B cell (primary cell): ENCODE measurements at regions of chr22 and their contacts with region 1.

Region 1: GRCh38 chr22:20016734-20017621 is at the start of gene ARVCF:
- DNase-seq: peak; percentile 97
- ATAC-seq: peak; percentile 69
- H3K4me3 ChIP-seq: peak within 1 kb of the TSS; percentile 22 to 79 (median 76)
- H3K4me3 Mint-ChIP-seq: peak within 1 kb of the TSS; percentile 91
- H3K27ac ChIP-seq: no peak within 1 kb of the TSS
- H3K27ac Mint-ChIP-seq: peak within 1 kb of the TSS; percentile 61
- H3K4me1 ChIP-seq: peaks cover 18 to 22% of the 10 kb centered on the region in 2 donors
- H3K4me1 Mint-ChIP-seq: peaks cover 25% of the 10 kb centered on the region
- H3K27me3 ChIP-seq: peaks cover 0 to 25% (median 4%) of the 10 kb centered on the region in 4 experiments
- H3K27me3 Mint-ChIP-seq: no peaks in the 10 kb centered on the region
- CTCF ChIP-seq: peak; percentile 39
- total RNA-seq, gene ARVCF: 6.7 and 8.4 TPM in 2 replicates

Region 2: GRCh38 chr22:19806213-19807145 is 210.5 kb before region 1 on chr22:
- CTCF ChIA-PET with region 1: no interaction called
- POLR2A ChIA-PET with region 1: no interaction called
- intact Hi-C with region 1: no loop called
- DNase-seq: no peak
- ATAC-seq: no peak
- H3K4me3 ChIP-seq: no peak overlapping the region
- H3K4me3 Mint-ChIP-seq: no peak overlapping the region
- H3K27ac ChIP-seq: no peak overlapping the region
- H3K27ac Mint-ChIP-seq: no peak overlapping the region
- H3K4me1 ChIP-seq: no peaks in the 10 kb centered on the region
- H3K4me1 Mint-ChIP-seq: no peaks in the 10 kb centered on the region
- H3K27me3 ChIP-seq: no peaks in the 10 kb centered on the region
- H3K27me3 Mint-ChIP-seq: no peaks in the 10 kb centered on the region
- CTCF ChIP-seq: no peak

Region 3: GRCh38 chr22:19854778-19855503 is 162.0 kb before region 1 on chr22 and contains the starts of genes GNB1L and RTL10:
- CTCF ChIA-PET with region 1: no interaction called
- POLR2A ChIA-PET with region 1: no interaction called
- intact Hi-C with region 1: loop called (anchors 2 kb)
- DNase-seq: peak; percentile 97
- ATAC-seq: peak; percentile 93
- H3K4me3 ChIP-seq: peak within 1 kb of the TSS; percentile 70 to 97 (median 88)
- H3K4me3 Mint-ChIP-seq: peak within 1 kb of the TSS; percentile 95
- H3K27ac ChIP-seq: peak within 1 kb of the TSS; percentile 85 to 88
- H3K27ac Mint-ChIP-seq: peak within 1 kb of the TSS; percentile 97
- H3K4me1 ChIP-seq: peaks cover 21 to 26% of the 10 kb centered on the region in 2 donors
- H3K4me1 Mint-ChIP-seq: peaks cover 43% of the 10 kb centered on the region
- H3K27me3 ChIP-seq: no peaks in the 10 kb centered on the region
- H3K27me3 Mint-ChIP-seq: no peaks in the 10 kb centered on the region
- CTCF ChIP-seq: no peak
- total RNA-seq, gene GNB1L: 6.6 and 7.2 TPM in 2 replicates
- total RNA-seq, gene RTL10: 14.8 and 15.2 TPM in 2 replicates

Region 4: DNA sequence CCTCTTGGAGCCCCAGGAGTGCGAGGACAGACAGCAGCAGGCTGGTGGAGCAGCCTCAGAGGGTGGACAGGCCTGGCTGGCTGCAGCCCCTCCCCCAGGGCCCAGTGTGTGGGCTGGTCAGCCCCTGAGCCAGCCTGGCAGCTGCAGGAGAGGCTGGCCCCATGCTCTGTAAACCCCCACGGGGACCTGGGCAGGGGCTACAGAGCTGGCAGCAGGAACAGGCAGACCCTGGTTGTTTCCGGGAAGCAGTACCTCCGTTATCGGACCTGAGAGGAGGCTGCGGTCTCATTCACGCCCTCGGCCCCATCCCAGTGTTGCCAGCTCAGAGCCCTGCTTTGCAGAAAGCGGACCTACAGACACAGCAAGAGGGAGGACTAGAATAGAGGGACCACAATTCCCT is 113.9 kb before region 1 on chr22:
- CTCF ChIA-PET with region 1: no interaction called
- POLR2A ChIA-PET with region 1: no interaction called
- intact Hi-C with region 1: no loop called
- DNase-seq: no peak
- ATAC-seq: no peak
- H3K4me3 ChIP-seq: no peak overlapping the region
- H3K4me3 Mint-ChIP-seq: no peak overlapping the region
- H3K27ac ChIP-seq: no peak overlapping the region
- H3K27ac Mint-ChIP-seq: no peak overlapping the region
- H3K4me1 ChIP-seq: no peaks in the 10 kb centered on the region
- H3K4me1 Mint-ChIP-seq: no peaks in the 10 kb centered on the region
- H3K27me3 ChIP-seq: no peaks in the 10 kb centered on the region
- H3K27me3 Mint-ChIP-seq: no peaks in the 10 kb centered on the region
- CTCF ChIP-seq: no peak

Region 5: DNA sequence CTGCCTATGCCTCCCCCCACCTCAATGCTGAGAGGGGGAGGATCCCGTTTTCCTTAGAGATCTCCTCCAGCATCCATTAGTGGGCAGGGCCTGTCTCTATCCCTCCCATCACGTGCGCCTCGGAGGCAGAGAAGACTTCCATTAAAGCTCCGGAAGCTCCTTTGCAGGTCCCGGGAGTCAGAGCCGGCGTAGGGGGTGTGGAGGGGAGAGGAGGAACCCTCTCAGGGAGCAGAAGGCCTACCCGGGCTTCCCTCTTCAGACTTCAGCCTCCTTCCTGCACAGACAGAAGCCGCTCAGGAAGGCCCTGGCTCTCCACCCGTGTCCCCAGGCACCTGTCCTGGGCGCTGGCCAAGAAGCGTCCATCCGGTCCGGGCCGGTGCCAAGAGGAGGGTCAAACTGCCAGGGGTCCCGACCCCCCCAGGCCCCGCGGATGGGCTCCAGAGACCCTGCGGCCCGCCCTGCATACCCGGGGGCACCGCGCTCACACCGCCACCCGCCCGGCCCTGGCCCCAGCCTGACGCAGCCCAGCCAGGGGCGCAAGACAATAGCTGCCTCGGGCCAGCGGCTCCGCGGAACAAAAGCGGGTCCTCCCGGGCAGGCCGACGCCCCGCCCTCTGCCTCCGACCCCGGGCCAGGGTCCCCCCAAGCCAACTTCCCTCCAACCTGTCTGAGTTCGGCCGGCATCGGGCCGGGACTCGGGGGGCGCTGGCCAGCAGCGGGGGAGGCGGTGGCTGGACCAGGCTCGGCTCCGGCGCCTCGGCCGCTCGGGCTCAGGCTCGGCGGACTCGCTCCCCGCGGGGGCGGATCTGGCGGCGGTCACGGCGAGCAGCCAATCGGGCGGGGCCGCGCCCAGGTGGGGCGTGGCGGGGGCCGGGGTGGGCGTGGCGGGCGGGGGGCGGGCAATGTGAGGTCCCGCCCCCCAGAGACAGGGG is 30.3 kb before region 1 on chr22:
- CTCF ChIA-PET with region 1: interaction called, 7 read pairs
- POLR2A ChIA-PET with region 1: no interaction called
- intact Hi-C with region 1: loop called (anchors 2 kb)
- DNase-seq: peak; percentile 78
- ATAC-seq: peak; percentile 89
- H3K4me3 ChIP-seq: peak overlapping the region in 4 of 5 experiments; percentile 41 to 66 (median 64)
- H3K4me3 Mint-ChIP-seq: peak overlapping the region; percentile 72
- H3K27ac ChIP-seq: no peak overlapping the region
- H3K27ac Mint-ChIP-seq: no peak overlapping the region
- H3K4me1 ChIP-seq: peaks cover 10 to 13% of the 10 kb centered on the region in 2 donors
- H3K4me1 Mint-ChIP-seq: peaks cover 7% of the 10 kb centered on the region
- H3K27me3 ChIP-seq: peaks cover 0 to 11% (median 0%) of the 10 kb centered on the region in 4 experiments
- H3K27me3 Mint-ChIP-seq: no peaks in the 10 kb centered on the region
- CTCF ChIP-seq: no peak

Region 6: GRCh38 chr22:20027966-20028854 is 11.2 kb after region 1 on chr22:
- CTCF ChIA-PET with region 1: interaction called, 11 read pairs
- POLR2A ChIA-PET with region 1: interaction called, 4 read pairs
- intact Hi-C with region 1: loop called (anchors 2 kb)
- DNase-seq: peak; percentile 16
- ATAC-seq: no peak
- H3K4me3 ChIP-seq: no peak overlapping the region
- H3K4me3 Mint-ChIP-seq: no peak overlapping the region
- H3K27ac ChIP-seq: no peak overlapping the region
- H3K27ac Mint-ChIP-seq: peak overlapping the region; percentile 46
- H3K4me1 ChIP-seq: peaks cover 21 to 34% of the 10 kb centered on the region in 2 donors
- H3K4me1 Mint-ChIP-seq: peaks cover 56% of the 10 kb centered on the region
- H3K27me3 ChIP-seq: no peaks in the 10 kb centered on the region
- H3K27me3 Mint-ChIP-seq: no peaks in the 10 kb centered on the region
- CTCF ChIP-seq: peak; percentile 34

Region 7: DNA sequence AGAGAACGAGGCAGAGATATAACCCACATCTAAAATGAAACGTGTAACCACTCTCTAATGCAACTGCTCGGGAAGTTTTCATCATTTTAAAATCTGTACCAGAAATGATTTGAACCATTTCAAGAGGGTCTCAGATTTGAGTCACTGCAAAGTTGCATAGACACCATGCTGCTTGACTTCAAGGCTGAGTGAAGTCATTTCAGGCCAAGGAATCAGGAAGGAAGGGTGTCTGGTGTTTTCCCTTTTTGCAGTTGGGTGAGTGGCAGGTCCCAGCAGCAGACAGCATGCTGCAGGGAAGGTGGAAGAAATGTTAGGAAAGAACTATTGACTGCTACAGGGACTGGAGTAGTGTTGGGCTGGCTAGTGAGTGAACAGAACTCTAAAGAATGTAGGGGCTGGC is 20.4 kb after region 1 on chr22:
- CTCF ChIA-PET with region 1: interaction called, 11 read pairs
- POLR2A ChIA-PET with region 1: interaction called, 4 read pairs
- intact Hi-C with region 1: loop called (anchors 2 kb)
- DNase-seq: no peak
- ATAC-seq: no peak
- H3K4me3 ChIP-seq: no peak overlapping the region
- H3K4me3 Mint-ChIP-seq: peak overlapping the region; percentile 55
- H3K27ac ChIP-seq: no peak overlapping the region
- H3K27ac Mint-ChIP-seq: peak overlapping the region; percentile 96
- H3K4me1 ChIP-seq: peaks cover 14 to 45% of the 10 kb centered on the region in 2 donors
- H3K4me1 Mint-ChIP-seq: peaks cover 56% of the 10 kb centered on the region
- H3K27me3 ChIP-seq: no peaks in the 10 kb centered on the region
- H3K27me3 Mint-ChIP-seq: no peaks in the 10 kb centered on the region
- CTCF ChIP-seq: no peak

Region 8: DNA sequence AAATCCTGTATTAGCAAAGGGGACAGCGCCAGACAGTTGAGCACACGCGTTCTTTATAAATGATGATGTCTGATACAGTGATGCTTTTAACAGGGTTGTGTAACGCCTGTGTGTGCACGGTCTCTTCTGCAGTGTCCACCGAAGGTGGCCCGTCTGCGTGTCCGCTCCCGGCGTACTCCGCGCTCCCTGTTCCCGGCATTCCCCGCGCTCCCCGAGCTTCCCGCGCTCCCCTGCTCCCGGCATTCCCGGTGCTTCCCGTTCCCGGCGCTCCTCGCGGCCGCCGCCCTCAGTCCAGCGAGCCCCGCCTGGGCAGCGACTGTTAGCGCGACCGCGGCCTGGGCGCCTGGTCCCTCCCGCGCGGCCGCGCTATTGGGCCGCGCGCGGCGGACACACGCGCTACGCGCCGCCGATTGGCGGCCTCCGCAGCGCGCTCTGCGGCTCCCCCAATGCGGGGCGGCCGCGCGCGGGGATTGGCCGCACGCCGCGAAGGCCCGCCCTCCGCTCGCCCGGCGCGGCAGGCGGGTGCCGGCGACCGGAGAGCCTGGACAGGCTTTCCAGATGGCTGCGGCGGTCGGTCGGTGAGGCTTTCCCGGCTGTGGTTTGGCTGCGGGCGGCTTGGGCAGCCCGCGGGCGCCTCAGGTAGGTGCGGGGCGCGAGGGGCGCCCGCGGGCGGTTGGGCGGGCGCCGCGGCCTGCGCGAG is 62.9 kb after region 1 on chr22 and contains the start of gene DGCR8:
- CTCF ChIA-PET with region 1: no interaction called
- POLR2A ChIA-PET with region 1: no interaction called
- intact Hi-C with region 1: loop called (anchors 1 kb)
- DNase-seq: peak; percentile 89
- ATAC-seq: peak; percentile 95
- H3K4me3 ChIP-seq: peak within 1 kb of the TSS; percentile 71 to 95 (median 86)
- H3K4me3 Mint-ChIP-seq: peak within 1 kb of the TSS; percentile 95
- H3K27ac ChIP-seq: peak within 1 kb of the TSS; percentile 29 to 70
- H3K27ac Mint-ChIP-seq: peak within 1 kb of the TSS; percentile 89
- H3K4me1 ChIP-seq: peaks cover 9 to 21% of the 10 kb centered on the region in 2 donors
- H3K4me1 Mint-ChIP-seq: peaks cover 37% of the 10 kb centered on the region
- H3K27me3 ChIP-seq: no peaks in the 10 kb centered on the region
- H3K27me3 Mint-ChIP-seq: no peaks in the 10 kb centered on the region
- CTCF ChIP-seq: no peak
- total RNA-seq, gene DGCR8: 43.2 and 46.6 TPM in 2 replicates

Region 9: GRCh38 chr22:20319745-20320658 is 303.0 kb after region 1 on chr22 and contains the start of gene DGCR6L:
- CTCF ChIA-PET with region 1: no interaction called
- POLR2A ChIA-PET with region 1: no interaction called
- intact Hi-C with region 1: no loop called
- DNase-seq: peak; percentile 97
- ATAC-seq: peak; percentile 91
- H3K4me3 ChIP-seq: peak within 1 kb of the TSS; percentile 42 to 90 (median 90)
- H3K4me3 Mint-ChIP-seq: peak within 1 kb of the TSS; percentile 93
- H3K27ac ChIP-seq: peak within 1 kb of the TSS in 1 of 2 donors; percentile 74
- H3K27ac Mint-ChIP-seq: peak within 1 kb of the TSS; percentile 87
- H3K4me1 ChIP-seq: peaks cover 6 to 20% of the 10 kb centered on the region in 2 donors
- H3K4me1 Mint-ChIP-seq: peaks cover 27% of the 10 kb centered on the region
- H3K27me3 ChIP-seq: no peaks in the 10 kb centered on the region
- H3K27me3 Mint-ChIP-seq: no peaks in the 10 kb centered on the region
- CTCF ChIP-seq: no peak
- total RNA-seq, gene DGCR6L: 20.5 and 21.2 TPM in 2 replicates